Right cardiac atrium (tissue), 5 donors: ENCODE measurements at regions of chr16 and their contacts with region 1.

Region 1: DNA sequence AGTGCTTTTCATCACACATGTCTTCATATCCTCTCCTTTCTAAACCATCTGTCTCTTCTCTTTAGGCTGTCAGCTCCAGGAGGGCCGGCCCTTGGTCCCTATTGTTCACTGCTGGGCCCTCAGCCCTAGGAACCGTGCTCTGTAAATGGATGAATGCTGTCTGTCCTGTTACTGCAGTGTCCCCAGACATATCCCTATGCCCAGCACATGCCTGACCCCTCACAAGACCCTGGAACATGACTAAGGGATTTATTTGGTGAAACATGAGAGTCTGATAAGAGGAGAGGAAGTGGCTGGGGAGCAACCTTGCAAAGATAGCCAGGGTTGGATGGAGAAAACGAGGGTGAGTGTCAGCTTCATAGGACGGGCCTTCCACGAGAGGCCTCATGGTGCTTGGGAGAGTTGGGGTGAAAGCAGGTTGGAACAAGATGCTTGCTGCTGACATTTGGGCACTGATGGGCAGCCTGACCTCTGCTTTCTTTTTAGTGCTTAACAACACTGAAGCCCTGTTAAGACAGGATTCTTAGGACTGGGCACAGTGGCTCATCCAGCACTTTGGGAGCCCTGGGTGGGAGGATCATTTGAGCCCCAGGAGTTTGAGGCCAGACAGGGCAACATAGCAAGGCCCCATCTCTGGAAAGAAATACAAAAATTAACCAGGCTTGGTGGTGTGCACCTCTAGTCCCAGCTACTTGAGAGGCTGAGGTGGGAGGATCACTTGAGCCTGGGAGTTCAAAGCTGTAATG is 39.0 kb downstream of the ABCC1 start:
- DNase-seq: no peak
- ATAC-seq: peak; percentile 42 to 62
- H3K4me3 ChIP-seq: no peak overlapping the region
- H3K27ac ChIP-seq: peak overlapping the region; percentile 89
- H3K4me1 ChIP-seq: peaks cover 17% of the 10 kb centered on the region
- H3K27me3 ChIP-seq: no peaks in the 10 kb centered on the region

Region 2: DNA sequence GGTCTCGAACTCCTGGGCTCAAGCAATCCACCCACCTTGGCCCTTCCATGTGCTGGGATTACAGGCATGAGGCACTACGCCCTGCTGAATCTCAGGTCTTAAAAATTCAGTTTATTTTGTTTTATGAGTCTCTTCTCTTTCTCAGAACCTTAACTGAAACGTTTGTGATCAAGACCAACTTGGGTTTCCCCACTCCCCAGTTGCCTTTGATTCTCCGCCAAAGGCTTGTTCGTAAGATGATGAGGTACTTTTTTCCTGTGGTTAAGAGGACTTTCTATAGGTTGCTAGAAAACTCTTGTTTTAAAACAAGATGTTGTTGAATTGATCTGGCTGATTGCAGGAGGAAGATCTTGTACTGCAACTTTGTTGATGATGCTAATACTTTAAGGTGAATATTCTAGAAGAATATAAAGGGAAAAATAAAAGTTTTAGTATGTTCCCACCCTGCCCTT is 27.4 kb before region 1 on chr16:
- intact Hi-C with region 1: no loop called
- DNase-seq: no peak
- ATAC-seq: no peak
- H3K4me3 ChIP-seq: no peak overlapping the region
- H3K27ac ChIP-seq: no peak overlapping the region
- H3K4me1 ChIP-seq: peaks cover 3% of the 10 kb centered on the region
- H3K27me3 ChIP-seq: no peaks in the 10 kb centered on the region

Region 3: DNA sequence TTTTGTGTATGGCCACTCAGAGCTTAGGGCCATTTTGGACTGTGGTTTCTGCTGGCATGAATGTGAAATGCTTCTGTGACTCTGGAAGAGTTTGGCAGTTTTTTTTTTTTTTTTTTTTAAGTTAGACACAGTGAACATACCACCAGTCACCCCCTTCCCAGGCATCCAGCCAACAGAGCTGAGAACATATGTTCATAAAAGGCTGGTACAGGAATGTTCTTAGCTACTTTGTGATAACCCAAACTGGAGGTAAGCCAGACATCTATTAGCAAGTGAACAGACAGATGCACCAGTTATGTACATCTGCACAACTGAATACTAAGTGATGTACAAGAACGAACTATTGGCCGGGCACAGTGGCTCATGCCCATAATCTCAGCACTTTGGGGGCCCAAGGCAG is 53.6 kb after region 1 on chr16:
- intact Hi-C with region 1: loop called in 1 of 4 experiments (anchors 10 kb)
- DNase-seq: peak in 2 of 3 donors; percentile 40 to 87
- ATAC-seq: peak; percentile 49 to 76
- H3K4me3 ChIP-seq: no peak overlapping the region
- H3K27ac ChIP-seq: peak overlapping the region; percentile 47
- H3K4me1 ChIP-seq: peaks cover 6% of the 10 kb centered on the region
- H3K27me3 ChIP-seq: no peaks in the 10 kb centered on the region

Region 4: DNA sequence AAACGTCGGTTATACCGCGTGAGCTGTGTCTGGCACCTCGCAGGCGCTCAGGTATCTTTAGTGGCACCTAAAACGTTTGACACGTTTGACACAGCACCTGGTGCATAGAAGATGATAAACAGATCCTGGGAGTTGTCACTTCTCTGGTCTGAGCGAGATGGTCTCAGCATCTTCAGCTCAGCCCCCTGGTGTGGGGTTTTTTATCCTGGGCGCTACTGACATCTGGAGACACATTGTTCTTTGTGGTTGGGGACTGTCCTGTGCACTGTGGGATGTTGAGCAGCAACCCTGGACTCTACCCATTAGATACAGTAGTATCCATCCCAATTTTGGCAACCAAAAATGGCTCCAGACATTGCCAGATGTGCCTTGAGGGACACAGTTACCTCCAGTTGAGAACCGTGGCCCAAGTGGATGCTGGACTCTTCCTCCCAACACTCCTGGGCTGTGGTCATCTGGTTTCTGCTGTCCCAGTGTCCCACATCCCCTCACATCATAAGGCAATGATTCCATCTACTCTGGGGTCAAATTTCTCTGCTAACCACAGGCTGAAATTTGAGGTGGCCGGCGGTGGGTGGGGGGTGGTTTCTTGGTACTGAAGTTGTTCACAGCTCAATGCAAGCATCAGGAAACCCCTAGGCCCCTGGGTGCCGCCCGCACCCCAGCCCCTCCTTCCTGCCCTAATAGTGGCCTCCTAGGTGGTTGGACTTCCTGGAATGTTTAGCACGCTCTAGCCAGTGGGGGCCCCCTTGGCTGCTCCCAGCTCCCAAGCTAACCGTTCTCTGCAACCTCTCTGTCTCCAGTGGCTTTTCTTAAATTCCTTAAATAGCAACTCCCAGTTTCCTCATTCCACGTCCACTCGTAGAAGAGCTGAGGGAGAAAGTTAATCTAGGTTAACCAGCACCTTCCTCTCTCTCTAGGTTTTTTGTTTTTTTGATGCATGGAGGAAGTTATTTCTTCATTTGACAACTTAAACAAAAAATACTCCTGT is 85.7 kb after region 1 on chr16:
- intact Hi-C with region 1: no loop called
- DNase-seq: peak in 1 of 3 donors; percentile 67
- ATAC-seq: peak; percentile 50 to 62
- H3K4me3 ChIP-seq: no peak overlapping the region
- H3K27ac ChIP-seq: no peak overlapping the region
- H3K4me1 ChIP-seq: peaks cover 3% of the 10 kb centered on the region
- H3K27me3 ChIP-seq: no peaks in the 10 kb centered on the region

Region 5: DNA sequence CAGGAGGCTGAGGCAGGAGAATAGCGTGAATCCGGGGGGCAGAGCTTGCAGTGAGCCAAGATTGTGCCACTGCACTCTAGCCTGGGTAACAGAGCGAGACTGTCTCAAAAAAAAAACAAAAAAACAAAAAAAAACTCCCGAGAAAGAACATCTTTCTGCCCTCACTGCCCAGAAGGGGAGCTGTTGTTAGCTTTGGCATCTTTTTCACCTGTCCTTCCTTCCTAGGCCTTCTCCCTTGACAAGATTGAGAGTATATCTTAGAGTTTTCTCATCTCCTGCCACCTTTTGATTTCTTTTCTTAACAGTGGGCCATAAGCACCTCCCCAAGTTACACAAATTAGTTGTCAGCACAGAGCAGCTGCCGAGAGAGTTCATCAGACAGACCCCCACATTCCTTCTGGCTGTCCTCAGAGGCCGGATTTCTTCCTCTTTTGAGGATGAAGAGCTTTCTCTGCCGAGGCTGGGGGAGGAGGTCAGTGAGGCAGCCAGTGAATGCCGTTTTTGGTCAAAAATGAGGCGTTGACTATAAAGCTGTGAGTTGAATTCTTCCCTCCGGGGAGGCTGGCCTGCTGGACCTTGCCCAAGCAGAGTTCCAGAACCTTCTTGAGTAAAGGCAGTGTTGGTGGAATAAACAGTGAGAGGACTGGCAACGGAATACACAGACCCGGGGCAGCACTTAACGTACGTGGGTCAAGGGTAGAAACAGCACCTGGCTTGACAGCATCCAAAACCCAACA is 107.8 kb after region 1 on chr16:
- intact Hi-C with region 1: no loop called
- DNase-seq: peak; percentile 62 to 84 (median 78)
- ATAC-seq: peak; percentile 45 to 76
- H3K4me3 ChIP-seq: no peak overlapping the region
- H3K27ac ChIP-seq: peak overlapping the region; percentile 48
- H3K4me1 ChIP-seq: no peaks in the 10 kb centered on the region
- H3K27me3 ChIP-seq: no peaks in the 10 kb centered on the region